Heart right ventricle (tissue), 16 donors: ENCODE measurements at regions of chr16 and their contacts with region 1.

Region 1: DNA sequence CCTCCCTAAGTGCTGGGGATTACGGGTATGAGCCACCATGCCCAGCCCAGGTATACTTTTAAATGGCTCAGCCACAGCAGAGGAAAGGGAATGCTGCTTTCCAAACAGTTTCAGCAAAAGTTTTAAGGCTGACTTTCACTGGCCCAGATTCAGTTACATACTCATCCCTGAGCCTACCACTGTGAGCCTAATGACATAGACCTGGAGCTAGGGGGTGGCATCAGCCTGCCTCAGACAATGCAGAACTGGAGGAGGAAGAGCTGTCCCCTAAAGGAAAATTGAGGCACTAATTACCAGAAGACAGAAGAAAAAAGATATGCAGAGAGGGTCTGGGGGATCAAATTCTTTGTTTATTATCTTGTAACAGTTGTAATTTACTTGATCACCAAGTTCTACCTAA is 43.9 kb downstream of the HS3ST4 start:
- DNase-seq: no peak
- ATAC-seq: no peak
- H3K4me3 ChIP-seq: no peak overlapping the region
- H3K27ac ChIP-seq: no peak overlapping the region
- H3K4me1 ChIP-seq: no peaks in the 10 kb centered on the region
- H3K27me3 ChIP-seq: peaks cover 0 to 11% (median 0%) of the 10 kb centered on the region in 7 donors
- CTCF ChIP-seq: no peak

Region 2: DNA sequence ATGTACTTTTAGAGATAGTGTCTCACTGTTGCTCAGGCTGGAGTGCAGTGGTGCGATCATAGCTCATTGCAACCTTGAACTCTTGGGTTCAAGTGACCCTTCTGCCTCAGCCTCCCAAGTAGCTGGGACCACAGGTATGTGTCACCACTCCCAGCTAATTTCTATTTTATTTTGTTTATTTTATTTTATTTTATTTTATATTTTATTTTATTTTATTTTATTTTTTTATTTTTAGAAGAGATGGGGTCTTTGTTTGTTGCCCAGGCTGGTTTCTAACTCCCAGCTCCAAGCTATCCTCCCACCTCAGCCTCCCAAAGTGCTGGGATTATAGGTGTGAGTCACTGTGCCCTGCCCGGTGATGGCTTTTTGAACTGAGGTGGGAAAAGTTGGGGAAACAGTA is 79.0 kb before region 1 on chr16:
- intact Hi-C with region 1: no loop called
- DNase-seq: no peak
- ATAC-seq: no peak
- H3K4me3 ChIP-seq: no peak overlapping the region
- H3K27ac ChIP-seq: no peak overlapping the region
- H3K4me1 ChIP-seq: no peaks in the 10 kb centered on the region
- H3K27me3 ChIP-seq: peaks cover 0 to 5% (median 0%) of the 10 kb centered on the region in 7 donors
- CTCF ChIP-seq: no peak

Region 3: GRCh38 chr16:25796239-25796638 is 60.6 kb after region 1 on chr16:
- intact Hi-C with region 1: loop called in 1 of 10 experiments (anchors 10 kb)
- DNase-seq: no peak
- ATAC-seq: no peak
- H3K4me3 ChIP-seq: no peak overlapping the region
- H3K27ac ChIP-seq: no peak overlapping the region
- H3K4me1 ChIP-seq: no peaks in the 10 kb centered on the region
- H3K27me3 ChIP-seq: peaks cover 0 to 9% (median 0%) of the 10 kb centered on the region in 7 donors
- CTCF ChIP-seq: no peak

Region 4: GRCh38 chr16:26453215-26453614 is 717.6 kb after region 1 on chr16:
- intact Hi-C with region 1: no loop called
- DNase-seq: no peak
- ATAC-seq: no peak
- H3K4me3 ChIP-seq: no peak overlapping the region
- H3K27ac ChIP-seq: no peak overlapping the region
- H3K4me1 ChIP-seq: no peaks in the 10 kb centered on the region
- H3K27me3 ChIP-seq: no peaks in the 10 kb centered on the region
- CTCF ChIP-seq: peak in 1 of 9 donors; percentile 20